Activated CD4-positive, alpha-beta T cell treated with anti-CD3 and anti-CD28 coated beads, Interleukin-2, amount 10 ng/mL, durations not matched to agents 7 days and 5 days (primary cell): ENCODE measurements at regions of chr9 and their contacts with region 1.

Region 1: DNA sequence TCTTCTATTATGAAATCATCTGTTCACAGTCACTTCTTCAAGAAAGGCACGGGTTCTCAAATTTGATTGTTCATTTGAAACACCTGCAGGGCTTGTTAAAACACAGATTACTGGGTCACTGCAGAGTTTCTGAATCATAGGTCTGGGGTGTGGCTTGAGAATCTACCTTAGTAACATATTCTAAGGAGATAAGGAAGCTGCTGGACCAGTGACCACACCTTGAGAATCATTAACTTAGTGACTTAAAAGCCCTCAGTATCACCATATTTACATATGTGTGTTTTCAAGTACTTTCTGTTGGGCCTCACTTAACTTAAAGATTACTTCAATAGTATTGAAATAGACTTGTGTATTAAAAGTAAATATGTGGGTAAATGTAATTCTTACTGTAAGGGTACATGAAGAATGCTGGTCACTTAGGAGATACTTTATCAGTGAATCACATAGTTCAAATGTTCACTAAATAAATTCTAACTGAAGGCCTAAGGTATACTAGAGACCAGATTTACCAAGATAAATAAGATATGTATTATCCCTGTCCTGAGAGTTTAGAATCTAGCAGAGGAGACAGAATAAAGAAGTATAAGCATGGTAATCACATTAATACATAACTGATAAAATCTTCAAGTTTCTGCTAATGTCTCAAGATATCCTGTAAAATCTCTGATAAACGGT is 1342.1 kb upstream of the C9orf72 start:
- DNase-seq: no peak
- H3K4me3 Mint-ChIP-seq: no peak overlapping the region
- H3K27ac Mint-ChIP-seq: no peak overlapping the region
- H3K4me1 Mint-ChIP-seq: no peaks in the 10 kb centered on the region
- H3K27me3 Mint-ChIP-seq: no peaks in the 10 kb centered on the region

Region 2: DNA sequence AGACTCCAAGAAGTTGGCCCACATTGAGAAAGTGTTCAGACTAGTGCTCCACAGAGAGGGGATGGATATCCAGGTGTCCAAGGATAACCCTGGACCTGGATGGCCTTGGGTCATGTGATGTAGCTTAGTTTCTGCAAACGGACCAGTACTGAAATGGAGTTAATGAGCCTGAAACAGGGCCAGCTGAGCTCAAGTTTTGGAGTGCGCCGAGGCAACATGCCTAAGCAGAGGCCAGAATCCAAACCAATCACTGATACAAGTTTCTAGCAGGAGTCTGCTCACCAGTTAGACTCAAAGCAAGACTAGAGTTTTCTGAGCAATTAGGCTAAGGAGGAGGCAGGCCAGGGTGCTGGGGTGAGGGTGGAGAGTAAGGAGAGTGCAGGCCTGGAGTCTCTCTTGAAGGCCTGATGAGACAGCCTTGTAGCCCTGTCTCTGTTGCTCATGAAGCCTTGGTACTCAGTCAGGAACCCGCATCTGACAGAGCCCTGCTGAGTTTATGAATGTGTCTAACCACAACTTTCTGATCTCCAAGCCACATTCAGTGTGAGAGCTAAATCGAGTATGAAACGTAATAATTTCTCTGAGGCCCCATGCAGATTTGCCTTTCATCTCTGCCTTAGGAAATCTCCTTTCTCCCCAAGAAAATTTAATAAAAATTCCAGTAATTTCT is 1549.6 kb before region 1 on chr9:
- CTCF ChIA-PET with region 1: no interaction called
- POLR2A ChIA-PET with region 1: interaction called, 11 read pairs
- DNase-seq: peak; percentile 77
- H3K4me3 Mint-ChIP-seq: peak overlapping the region; percentile 43
- H3K27ac Mint-ChIP-seq: peak overlapping the region; percentile 81
- H3K4me1 Mint-ChIP-seq: peaks cover 43% of the 10 kb centered on the region
- H3K27me3 Mint-ChIP-seq: peaks cover 7% of the 10 kb centered on the region